Cardiac septum (tissue), 1 donor: ENCODE measurements at regions of chr12 and their contacts with region 1.

Region 1: DNA sequence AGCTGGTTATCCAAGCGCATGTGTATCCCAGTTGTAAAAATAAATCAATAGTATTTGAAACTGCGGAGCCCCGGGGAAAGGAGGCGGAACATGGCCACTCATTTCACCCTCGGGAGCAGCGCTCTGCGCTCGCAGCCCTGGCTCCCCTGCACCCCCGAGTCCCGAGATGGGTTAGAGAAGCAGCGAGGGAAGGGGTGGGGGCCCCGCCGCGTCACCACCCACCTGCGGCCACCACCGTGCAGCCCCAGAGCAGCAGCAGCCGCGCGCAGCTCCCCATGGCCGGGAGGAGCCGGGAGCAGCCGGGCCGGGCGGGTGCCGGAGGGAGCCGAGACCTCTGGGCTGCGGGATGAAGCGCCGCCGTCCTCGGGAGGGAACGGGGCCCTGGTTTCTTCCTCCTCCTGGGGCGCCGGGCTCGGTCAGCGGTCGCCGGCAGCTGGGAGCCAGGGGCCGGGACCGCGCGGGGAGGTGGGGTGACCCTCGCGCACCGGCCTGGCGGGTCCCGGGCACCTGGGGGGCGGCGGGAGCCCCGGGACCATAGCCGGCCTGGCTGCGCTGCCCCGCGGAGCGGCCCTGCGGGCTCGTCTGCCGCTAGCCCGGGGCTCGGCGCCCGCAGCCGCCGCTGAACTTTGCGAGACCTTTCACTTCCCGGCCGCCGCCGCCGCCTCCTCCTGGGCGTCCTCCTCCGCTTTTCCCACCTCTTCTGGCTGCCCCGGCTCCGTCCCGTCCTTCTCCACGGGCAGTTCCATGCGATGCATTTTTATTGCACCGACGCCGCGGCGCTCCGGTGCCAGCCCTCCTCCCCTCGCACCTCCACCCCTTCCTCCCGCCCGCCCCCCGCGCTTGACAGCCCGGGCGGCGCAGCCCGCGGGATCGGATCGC is at the start of gene NTN4:
- DNase-seq: no peak
- total RNA-seq, gene NTN4: 77.8 TPM

Region 2: GRCh38 chr12:95615749-95616148 is 174.5 kb before region 1 on chr12:
- intact Hi-C with region 1: loop called (anchors 5 kb)
- DNase-seq: no peak

Region 3: GRCh38 chr12:95721350-95721749 is 68.9 kb before region 1 on chr12:
- intact Hi-C with region 1: no loop called
- DNase-seq: no peak

Region 4: GRCh38 chr12:95739561-95740313 is 50.5 kb before region 1 on chr12:
- intact Hi-C with region 1: loop called (anchors 5 kb)
- DNase-seq: no peak